ENCODE measurements at regions of chr15 and their contacts with region 1.

Region 1: GRCh38 chr15:92917606-92918407 is 17.7 kb downstream of the CHD2 start:
- DNase-seq: peak; percentile 92
- H3K4me3 ChIP-seq: peak overlapping the region; percentile 10; the same call in 1 of the 2 replicates
- H3K4me3 Mint-ChIP-seq: peak overlapping the region; percentile 78
- H3K27ac Mint-ChIP-seq: peak overlapping the region; percentile 88
- H3K4me1 ChIP-seq: peaks cover 72% of the 10 kb centered on the region
- H3K4me1 Mint-ChIP-seq: peaks cover 46% of the 10 kb centered on the region
- H3K27me3 ChIP-seq: no peaks in the 10 kb centered on the region
- H3K27me3 Mint-ChIP-seq: no peaks in the 10 kb centered on the region
- CTCF ChIP-seq: peak; percentile 64 to 78

Region 2: DNA sequence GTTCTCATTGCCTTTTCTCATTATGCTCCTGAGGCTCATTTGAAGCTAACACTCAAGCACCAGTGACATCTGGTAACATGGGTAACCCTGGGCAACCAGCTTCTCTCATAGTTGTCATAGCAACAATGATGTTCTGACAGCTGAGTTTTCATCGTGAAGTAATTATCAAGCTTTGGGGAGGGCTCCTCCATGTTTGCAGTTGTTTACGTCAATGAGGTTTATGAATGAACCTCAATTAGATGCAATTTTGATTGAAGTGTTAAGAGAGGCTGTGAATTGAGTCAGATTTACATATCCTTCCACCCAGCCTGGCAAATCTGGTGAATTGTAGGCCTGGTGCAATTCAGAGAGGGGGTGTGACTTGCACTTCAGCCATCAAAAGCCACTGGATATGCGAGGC is 137.0 kb before region 1 on chr15:
- CTCF ChIA-PET with region 1: no interaction called
- POLR2A ChIA-PET with region 1: no interaction called
- intact Hi-C with region 1: no loop called
- DNase-seq: no peak
- H3K4me3 ChIP-seq: no peak overlapping the region
- H3K4me3 Mint-ChIP-seq: no peak overlapping the region
- H3K27ac Mint-ChIP-seq: no peak overlapping the region
- H3K4me1 ChIP-seq: no peaks in the 10 kb centered on the region
- H3K4me1 Mint-ChIP-seq: no peaks in the 10 kb centered on the region
- H3K27me3 ChIP-seq: no peaks in the 10 kb centered on the region
- H3K27me3 Mint-ChIP-seq: no peaks in the 10 kb centered on the region
- CTCF ChIP-seq: no peak

Region 3: GRCh38 chr15:92797168-92797951 is 120.4 kb before region 1 on chr15:
- CTCF ChIA-PET with region 1: interaction called, 17 read pairs
- POLR2A ChIA-PET with region 1: interaction called, 6 read pairs
- intact Hi-C with region 1: loop called (anchors 1 kb)
- DNase-seq: peak in 1 of 2 experiments; percentile 77
- H3K4me3 ChIP-seq: no peak overlapping the region
- H3K4me3 Mint-ChIP-seq: peak overlapping the region; percentile 50
- H3K27ac Mint-ChIP-seq: peak overlapping the region; percentile 94
- H3K4me1 ChIP-seq: peaks cover 42% of the 10 kb centered on the region
- H3K4me1 Mint-ChIP-seq: peaks cover 17% of the 10 kb centered on the region
- H3K27me3 ChIP-seq: no peaks in the 10 kb centered on the region
- H3K27me3 Mint-ChIP-seq: no peaks in the 10 kb centered on the region
- CTCF ChIP-seq: peak; percentile 55 to 56

Region 4: GRCh38 chr15:92864127-92864814 is 53.5 kb before region 1 on chr15:
- CTCF ChIA-PET with region 1: no interaction called
- POLR2A ChIA-PET with region 1: no interaction called
- intact Hi-C with region 1: no loop called
- DNase-seq: no peak
- H3K4me3 ChIP-seq: no peak overlapping the region
- H3K4me3 Mint-ChIP-seq: no peak overlapping the region
- H3K27ac Mint-ChIP-seq: no peak overlapping the region
- H3K4me1 ChIP-seq: peaks cover 8% of the 10 kb centered on the region
- H3K4me1 Mint-ChIP-seq: peaks cover 10% of the 10 kb centered on the region
- H3K27me3 ChIP-seq: no peaks in the 10 kb centered on the region
- H3K27me3 Mint-ChIP-seq: no peaks in the 10 kb centered on the region
- CTCF ChIP-seq: no peak

Region 5: DNA sequence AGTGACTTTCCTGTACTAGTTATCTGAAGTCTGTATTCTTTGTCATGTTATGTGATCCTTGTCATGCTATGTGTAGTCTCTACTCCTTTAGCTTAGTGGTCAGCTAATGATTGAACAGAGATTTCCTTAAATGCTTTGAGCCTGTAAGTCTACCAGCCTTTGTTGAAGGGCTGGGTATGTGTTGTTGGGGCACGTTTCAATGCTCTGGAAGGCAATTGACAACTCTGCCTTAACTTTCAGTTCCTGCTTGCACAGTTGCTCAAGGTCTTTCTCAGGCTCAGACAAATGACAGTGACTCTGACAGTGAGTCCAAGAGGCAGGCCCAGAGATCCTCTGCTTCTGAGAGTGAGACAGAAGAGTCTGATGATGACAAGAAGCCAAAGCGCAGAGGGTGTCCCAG is 71.7 kb after region 1 on chr15:
- CTCF ChIA-PET with region 1: no interaction called
- POLR2A ChIA-PET with region 1: no interaction called
- intact Hi-C with region 1: no loop called
- DNase-seq: no peak
- H3K4me3 ChIP-seq: no peak overlapping the region
- H3K4me3 Mint-ChIP-seq: no peak overlapping the region
- H3K27ac Mint-ChIP-seq: no peak overlapping the region
- H3K4me1 ChIP-seq: no peaks in the 10 kb centered on the region
- H3K4me1 Mint-ChIP-seq: no peaks in the 10 kb centered on the region
- H3K27me3 ChIP-seq: no peaks in the 10 kb centered on the region
- H3K27me3 Mint-ChIP-seq: no peaks in the 10 kb centered on the region
- CTCF ChIP-seq: no peak

Measured in Caco-2 (cell line).